ENCODE measurements at regions of chr1 and their contacts with region 1.

Region 1: GRCh38 chr1:11645670-11646265 is 8.5 kb downstream of the FBXO2 start:
- DNase-seq: peak; percentile 85
- ATAC-seq: peak; percentile 70
- H3K4me3 ChIP-seq: no peak overlapping the region
- H3K27ac ChIP-seq: no peak overlapping the region
- H3K4me1 ChIP-seq: peaks cover 7% of the 10 kb centered on the region; the same call in 1 of the 2 replicates
- H3K27me3 ChIP-seq: no peaks in the 10 kb centered on the region
- CTCF ChIP-seq: peak; percentile 73

Region 2: GRCh38 chr1:10980094-10980577 is 665.6 kb before region 1 on chr1:
- CTCF ChIA-PET with region 1: interaction called, 12 read pairs
- POLR2A ChIA-PET with region 1: no interaction called
- intact Hi-C with region 1: no loop called
- DNase-seq: peak; percentile 76
- ATAC-seq: peak; percentile 94
- H3K4me3 ChIP-seq: peak overlapping the region; percentile 56
- H3K27ac ChIP-seq: no peak overlapping the region
- H3K4me1 ChIP-seq: peaks cover 14% of the 10 kb centered on the region; the same call in 1 of the 2 replicates
- H3K27me3 ChIP-seq: no peaks in the 10 kb centered on the region
- CTCF ChIP-seq: peak; percentile 65

Region 3: GRCh38 chr1:11037740-11038182 is 608.0 kb before region 1 on chr1:
- CTCF ChIA-PET with region 1: interaction called, 15 read pairs
- POLR2A ChIA-PET with region 1: no interaction called
- intact Hi-C with region 1: loop called (anchors 1 kb)
- DNase-seq: peak; percentile 91
- ATAC-seq: peak; percentile 98
- H3K4me3 ChIP-seq: no peak overlapping the region
- H3K27ac ChIP-seq: no peak overlapping the region
- H3K4me1 ChIP-seq: no peaks in the 10 kb centered on the region
- H3K27me3 ChIP-seq: no peaks in the 10 kb centered on the region
- CTCF ChIP-seq: peak; percentile 98

Region 4: DNA sequence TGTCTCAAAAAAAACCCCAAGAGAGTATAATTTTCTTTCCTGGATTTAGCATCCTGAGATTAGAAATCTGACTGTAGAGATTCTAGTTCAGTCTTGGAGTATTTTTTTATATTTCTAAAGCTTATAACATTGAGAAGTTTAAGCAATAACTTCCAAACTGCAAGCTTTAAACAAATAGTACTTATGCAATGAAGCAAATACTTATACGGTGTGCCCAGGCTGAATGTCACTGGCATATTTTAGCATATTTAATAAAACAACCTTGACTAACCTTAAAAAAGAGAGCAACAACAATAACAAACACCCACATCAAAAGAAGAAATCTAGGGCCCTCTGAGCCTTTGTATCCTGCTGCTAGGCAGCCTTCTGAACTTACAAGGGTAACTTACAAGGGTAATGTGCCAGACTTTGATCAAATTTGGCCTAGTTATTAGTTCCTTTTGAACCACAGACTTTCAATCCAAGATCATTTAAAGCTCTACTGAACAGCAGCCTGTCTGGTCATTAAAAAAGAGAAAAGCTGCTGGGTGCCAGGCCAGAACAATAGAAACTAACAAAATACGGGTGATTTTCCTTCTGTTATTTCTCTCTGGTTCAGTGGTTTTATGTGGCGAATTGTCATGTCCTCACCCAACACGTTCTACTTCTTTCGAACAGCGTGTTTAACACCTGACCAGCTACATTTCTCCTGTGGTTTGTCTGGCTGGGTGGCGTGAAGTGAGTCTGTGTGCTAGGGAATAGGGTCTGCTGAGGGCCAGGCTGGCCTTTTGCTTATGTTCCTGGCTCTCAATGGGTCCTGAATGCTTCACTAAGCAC is 399.7 kb before region 1 on chr1:
- CTCF ChIA-PET with region 1: no interaction called
- POLR2A ChIA-PET with region 1: no interaction called
- intact Hi-C with region 1: loop called (anchors 1 kb)
- DNase-seq: no peak
- ATAC-seq: no peak
- H3K4me3 ChIP-seq: no peak overlapping the region
- H3K27ac ChIP-seq: no peak overlapping the region
- H3K4me1 ChIP-seq: no peaks in the 10 kb centered on the region
- H3K27me3 ChIP-seq: no peaks in the 10 kb centered on the region
- CTCF ChIP-seq: no peak

Region 5: GRCh38 chr1:11285883-11286734 is 359.7 kb before region 1 on chr1:
- CTCF ChIA-PET with region 1: no interaction called
- POLR2A ChIA-PET with region 1: no interaction called
- intact Hi-C with region 1: loop called (anchors 10 kb)
- DNase-seq: peak; percentile 30
- ATAC-seq: no peak
- H3K4me3 ChIP-seq: no peak overlapping the region
- H3K27ac ChIP-seq: no peak overlapping the region
- H3K4me1 ChIP-seq: peaks cover 5% of the 10 kb centered on the region; the same call in 1 of the 2 replicates
- H3K27me3 ChIP-seq: no peaks in the 10 kb centered on the region
- CTCF ChIP-seq: peak; percentile 56

Region 6: DNA sequence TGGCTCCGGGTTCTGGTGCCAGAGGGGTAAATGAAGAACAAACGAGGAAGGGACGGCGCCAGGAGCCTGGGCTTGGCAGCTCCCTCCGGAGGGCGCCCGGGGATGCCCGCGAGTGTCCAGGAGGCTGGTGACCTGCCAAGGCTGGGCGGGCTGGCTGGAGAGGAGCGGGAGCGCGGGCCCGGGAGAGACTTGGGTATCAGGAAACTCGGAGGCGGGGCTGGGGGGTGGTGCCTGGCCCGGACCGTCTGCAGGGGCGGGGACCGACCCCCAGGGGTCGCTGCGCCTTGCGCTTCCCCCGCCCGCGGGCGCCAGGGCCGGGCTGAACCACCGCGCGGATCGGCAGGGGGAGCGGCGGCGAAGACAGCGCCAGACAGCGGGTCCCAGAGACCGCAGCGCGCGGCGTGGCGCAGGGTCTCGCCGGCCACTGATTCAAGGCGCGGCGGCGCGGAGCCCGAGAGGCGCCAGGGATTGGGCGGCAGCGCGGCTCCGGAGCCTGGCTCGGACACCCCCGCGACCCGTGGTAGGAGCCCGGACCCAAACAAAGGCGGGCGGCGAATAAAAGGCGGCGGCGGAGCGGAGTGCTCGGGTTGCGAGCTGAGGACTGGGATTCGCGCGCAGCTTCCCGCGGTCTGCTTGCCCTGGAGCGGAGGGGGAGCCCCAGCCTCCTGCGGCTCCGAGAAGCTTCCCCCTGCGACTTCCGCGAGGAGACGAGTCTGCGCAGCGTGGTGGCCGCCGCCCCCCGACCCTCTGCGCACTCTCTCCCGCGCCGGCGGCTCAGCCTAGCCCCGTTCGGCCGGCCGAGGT is 167.0 kb before region 1 on chr1 and contains the start of gene DISP3:
- CTCF ChIA-PET with region 1: no interaction called
- POLR2A ChIA-PET with region 1: no interaction called
- intact Hi-C with region 1: loop called (anchors 2 kb)
- DNase-seq: peak; percentile 66
- ATAC-seq: peak; percentile 88
- H3K4me3 ChIP-seq: peak within 1 kb of the TSS; percentile 74
- H3K27ac ChIP-seq: no peak within 1 kb of the TSS
- H3K4me1 ChIP-seq: peaks cover 6% of the 10 kb centered on the region; the same call in 1 of the 2 replicates
- H3K27me3 ChIP-seq: peaks cover 34% of the 10 kb centered on the region
- CTCF ChIP-seq: peak; percentile 60
- total RNA-seq, gene DISP3: 0.35 and 0.40 TPM in 2 replicates

Region 7: GRCh38 chr1:11736746-11737639 is 91.2 kb after region 1 on chr1:
- CTCF ChIA-PET with region 1: no interaction called
- POLR2A ChIA-PET with region 1: no interaction called
- intact Hi-C with region 1: no loop called
- DNase-seq: peak; percentile 75
- ATAC-seq: peak; percentile 21
- H3K4me3 ChIP-seq: peak overlapping the region; percentile 84
- H3K27ac ChIP-seq: peak overlapping the region; percentile 86
- H3K4me1 ChIP-seq: peaks cover 9% of the 10 kb centered on the region
- H3K27me3 ChIP-seq: no peaks in the 10 kb centered on the region
- CTCF ChIP-seq: no peak